ENCODE measurements at regions of chr2 and their contacts with region 1.

Region 1: GRCh38 chr2:239706367-239706766 is 305.5 kb upstream of the HDAC4 start:
- DNase-seq: no peak
- ATAC-seq: no peak
- H3K4me3 ChIP-seq: no peak overlapping the region
- H3K27ac ChIP-seq: no peak overlapping the region
- H3K4me1 ChIP-seq: no peaks in the 10 kb centered on the region
- H3K27me3 ChIP-seq: no peaks in the 10 kb centered on the region; the same call in 1 of the 2 replicates
- CTCF ChIP-seq: no peak

Region 2: DNA sequence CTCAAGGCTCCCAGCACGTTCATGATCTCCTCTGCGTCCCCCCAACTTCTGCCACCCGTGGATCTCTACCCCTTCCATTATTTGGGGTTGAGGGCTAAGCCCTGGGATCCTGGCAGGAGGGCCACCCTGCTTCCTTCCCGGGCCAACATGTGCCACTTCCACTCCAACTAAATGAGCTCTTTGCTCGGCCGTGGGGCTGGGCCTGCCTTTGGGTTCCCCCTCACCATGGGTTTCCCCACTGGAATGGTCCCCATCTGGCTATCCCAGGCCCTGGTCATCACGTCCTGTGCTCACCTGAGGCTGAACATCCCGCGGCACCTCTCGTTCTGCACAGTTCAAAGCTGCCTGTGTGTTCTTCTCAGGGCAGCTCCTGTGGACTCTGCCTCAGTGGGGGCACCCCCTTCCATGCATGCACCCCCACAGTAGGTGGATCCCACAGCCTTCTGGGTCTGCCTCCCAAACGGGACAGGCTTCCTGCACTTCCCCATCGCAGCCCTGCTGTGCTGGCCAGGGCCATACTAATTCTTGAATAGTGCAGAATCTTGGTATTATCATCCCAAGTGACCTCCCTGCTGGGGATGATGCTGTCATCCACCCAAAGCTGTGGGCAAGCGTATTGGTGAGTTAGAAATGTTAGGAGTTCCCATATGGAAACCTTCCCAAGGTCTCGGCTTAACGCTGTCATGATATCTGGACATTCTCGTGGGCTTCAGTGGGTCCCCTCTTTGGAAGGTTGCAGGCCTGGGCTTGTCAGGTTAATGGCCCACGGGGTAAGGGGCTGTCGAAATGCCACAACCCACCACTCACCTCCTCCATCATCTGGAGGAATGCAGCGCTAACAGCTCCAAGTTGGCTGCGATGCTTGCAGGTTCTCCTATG is 1008.9 kb before region 1 on chr2:
- CTCF ChIA-PET with region 1: no interaction called
- POLR2A ChIA-PET with region 1: interaction called, 12 read pairs
- in situ Hi-C with region 1: no loop called
- intact Hi-C with region 1: no loop called
- DNase-seq: no peak
- ATAC-seq: no peak
- H3K4me3 ChIP-seq: no peak overlapping the region
- H3K27ac ChIP-seq: no peak overlapping the region
- H3K4me1 ChIP-seq: no peaks in the 10 kb centered on the region
- H3K27me3 ChIP-seq: no peaks in the 10 kb centered on the region
- CTCF ChIP-seq: no peak

Region 3: GRCh38 chr2:239660390-239661230 is 45.8 kb before region 1 on chr2:
- CTCF ChIA-PET with region 1: no interaction called
- POLR2A ChIA-PET with region 1: no interaction called
- in situ Hi-C with region 1: no loop called
- intact Hi-C with region 1: no loop called
- DNase-seq: no peak
- ATAC-seq: no peak
- H3K4me3 ChIP-seq: no peak overlapping the region
- H3K27ac ChIP-seq: no peak overlapping the region
- H3K4me1 ChIP-seq: no peaks in the 10 kb centered on the region
- H3K27me3 ChIP-seq: peaks cover 30% of the 10 kb centered on the region
- CTCF ChIP-seq: no peak